ENCODE measurements at regions of chr13 and their contacts with region 1.

Region 1: GRCh38 chr13:48334534-48335127 is 31.1 kb downstream of the RB1 start:
- DNase-seq: no peak
- H3K4me3 Mint-ChIP-seq: no peak overlapping the region
- H3K27ac Mint-ChIP-seq: no peak overlapping the region
- H3K4me1 Mint-ChIP-seq: peaks cover 3% of the 10 kb centered on the region
- H3K27me3 Mint-ChIP-seq: no peaks in the 10 kb centered on the region

Region 2: GRCh38 chr13:47484548-47484947 is 850.1 kb before region 1 on chr13:
- CTCF ChIA-PET with region 1: no interaction called
- intact Hi-C with region 1: no loop called
- DNase-seq: no peak
- H3K4me3 Mint-ChIP-seq: no peak overlapping the region
- H3K27ac Mint-ChIP-seq: no peak overlapping the region
- H3K4me1 Mint-ChIP-seq: no peaks in the 10 kb centered on the region
- H3K27me3 Mint-ChIP-seq: peaks cover 2% of the 10 kb centered on the region

Region 3: GRCh38 chr13:48574041-48574796 is 239.6 kb after region 1 on chr13:
- CTCF ChIA-PET with region 1: interaction called, 106 read pairs
- intact Hi-C with region 1: no loop called
- DNase-seq: no peak
- H3K4me3 Mint-ChIP-seq: no peak overlapping the region
- H3K27ac Mint-ChIP-seq: no peak overlapping the region
- H3K4me1 Mint-ChIP-seq: peaks cover 5% of the 10 kb centered on the region
- H3K27me3 Mint-ChIP-seq: no peaks in the 10 kb centered on the region

Region 4: GRCh38 chr13:48580185-48580803 is 245.7 kb after region 1 on chr13:
- CTCF ChIA-PET with region 1: interaction called, 106 read pairs
- intact Hi-C with region 1: loop called (anchors 1 kb)
- DNase-seq: peak; percentile 88
- H3K4me3 Mint-ChIP-seq: no peak overlapping the region
- H3K27ac Mint-ChIP-seq: no peak overlapping the region
- H3K4me1 Mint-ChIP-seq: peaks cover 2% of the 10 kb centered on the region
- H3K27me3 Mint-ChIP-seq: peaks cover 6% of the 10 kb centered on the region

Measured in activated naive CD4-positive, alpha-beta T cell treated with anti-CD3 and anti-CD28 coated beads for 36 hours (primary cell).